ENCODE measurements at regions of chr14 and their contacts with region 1.

Region 1: DNA sequence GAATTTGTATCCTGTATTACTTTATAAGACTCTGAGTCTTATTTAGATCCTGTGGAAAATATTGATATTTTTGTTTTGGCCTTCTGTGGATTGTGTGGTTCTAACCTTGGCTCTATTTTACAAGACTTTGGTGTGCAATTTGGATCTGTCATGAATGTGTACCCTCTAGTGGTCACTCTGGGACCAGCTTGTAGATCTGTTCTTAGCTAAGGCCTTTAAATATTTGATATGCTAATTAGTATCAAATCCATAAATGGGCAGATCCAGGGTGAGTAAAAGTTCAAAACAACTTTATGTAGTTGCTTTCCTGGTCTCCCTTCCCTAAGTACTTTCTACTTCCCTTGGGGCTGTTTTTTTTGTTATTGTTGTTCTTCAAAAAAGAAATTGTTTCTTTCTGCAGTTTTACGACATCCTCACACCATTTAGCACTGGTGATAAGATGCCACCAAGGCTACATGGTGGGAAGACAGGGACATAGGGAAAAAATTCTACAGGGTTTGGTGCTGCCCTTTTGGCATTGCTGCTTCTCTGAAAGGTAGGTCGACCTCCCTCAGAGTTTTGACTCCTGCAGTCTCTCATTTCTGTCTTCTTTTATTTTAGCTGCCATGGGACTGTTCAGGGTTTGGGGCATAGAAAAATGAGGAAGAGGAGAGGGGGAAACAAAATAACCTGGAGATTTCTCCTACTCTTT is 238.5 kb downstream of the GPHN start:
- DNase-seq: no peak
- H3K4me3 Mint-ChIP-seq: no peak overlapping the region
- H3K27ac Mint-ChIP-seq: no peak overlapping the region
- H3K4me1 Mint-ChIP-seq: no peaks in the 10 kb centered on the region
- H3K27me3 Mint-ChIP-seq: no peaks in the 10 kb centered on the region

Region 2: DNA sequence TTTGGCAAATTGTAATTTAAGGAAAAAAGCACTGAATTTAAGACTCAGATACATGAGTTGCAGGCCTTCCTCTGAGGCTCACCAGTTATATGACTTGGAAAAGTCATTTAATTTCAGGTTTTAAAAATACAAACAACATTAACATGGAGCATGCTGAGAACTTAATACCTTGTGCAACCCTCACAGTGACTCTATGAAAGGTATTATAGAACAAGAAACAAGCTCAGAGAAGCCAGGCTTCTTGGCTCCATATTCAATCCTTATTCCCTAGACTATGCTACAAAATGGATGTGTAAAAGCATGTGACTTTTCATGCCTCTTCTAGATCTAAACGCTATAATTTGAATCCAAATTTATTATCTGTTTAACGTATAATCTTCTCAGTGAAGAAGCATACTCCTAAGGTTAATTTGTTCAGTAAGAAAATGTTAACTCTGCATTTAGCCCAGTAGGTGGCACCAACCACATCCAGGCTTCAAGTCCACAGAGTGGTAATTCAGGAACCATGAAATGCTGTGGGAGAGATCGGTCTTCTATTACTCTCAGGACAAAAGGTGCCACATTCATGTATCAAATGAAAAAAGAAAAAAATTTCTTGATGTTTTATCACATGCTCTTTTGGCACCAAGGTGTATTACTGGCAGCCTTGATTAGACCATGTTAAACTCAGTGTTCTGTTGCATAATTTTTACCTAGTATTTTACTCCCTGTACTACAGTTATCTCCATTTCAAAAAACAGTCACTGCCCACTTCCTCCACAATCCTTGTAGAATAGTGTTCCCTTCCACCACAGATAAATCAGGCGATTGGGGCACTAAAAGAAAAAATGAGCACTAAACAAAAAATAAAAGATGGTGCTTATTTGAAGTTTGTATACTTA is 251.0 kb before region 1 on chr14:
- intact Hi-C with region 1: loop called (anchors 10 kb)
- DNase-seq: peak; percentile 79
- H3K4me3 Mint-ChIP-seq: no peak overlapping the region
- H3K27ac Mint-ChIP-seq: no peak overlapping the region
- H3K4me1 Mint-ChIP-seq: peaks cover 22% of the 10 kb centered on the region
- H3K27me3 Mint-ChIP-seq: peaks cover 6% of the 10 kb centered on the region

Region 3: DNA sequence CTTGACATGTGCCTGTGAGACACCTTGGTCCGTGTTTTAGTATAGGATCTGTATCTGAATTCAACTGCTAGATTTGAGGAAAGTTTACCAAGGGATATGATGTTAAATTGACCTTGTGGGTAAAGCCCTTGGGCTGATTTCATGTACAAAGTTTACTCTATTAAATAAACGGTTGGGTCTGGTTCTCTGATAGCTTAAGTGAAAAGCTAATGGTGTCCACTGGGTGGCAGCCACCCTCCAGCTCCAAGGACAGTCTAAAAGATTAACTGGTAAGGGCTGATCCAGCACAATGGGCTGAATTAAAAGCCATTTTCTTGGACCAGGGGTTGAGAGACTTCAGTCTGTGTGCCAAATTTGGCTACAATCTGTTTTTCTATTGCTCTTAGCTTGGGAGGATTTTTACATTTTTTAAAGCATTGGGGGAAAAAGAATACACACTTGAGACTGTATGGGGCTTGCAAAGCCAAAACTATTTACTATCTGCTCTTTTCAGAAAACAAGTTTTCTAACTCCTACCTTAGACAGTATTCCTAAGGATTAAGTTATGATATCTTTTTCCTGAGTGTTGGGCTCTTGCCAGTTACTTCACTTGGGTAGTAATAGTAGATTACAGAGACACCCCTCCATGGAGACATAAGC is 122.0 kb before region 1 on chr14:
- intact Hi-C with region 1: loop called (anchors 10 kb)
- DNase-seq: peak; percentile 78
- H3K4me3 Mint-ChIP-seq: no peak overlapping the region
- H3K27ac Mint-ChIP-seq: no peak overlapping the region
- H3K4me1 Mint-ChIP-seq: no peaks in the 10 kb centered on the region
- H3K27me3 Mint-ChIP-seq: no peaks in the 10 kb centered on the region

Region 4: GRCh38 chr14:66833816-66834215 is 87.4 kb after region 1 on chr14:
- intact Hi-C with region 1: no loop called
- DNase-seq: no peak
- H3K4me3 Mint-ChIP-seq: no peak overlapping the region
- H3K27ac Mint-ChIP-seq: no peak overlapping the region
- H3K4me1 Mint-ChIP-seq: no peaks in the 10 kb centered on the region
- H3K27me3 Mint-ChIP-seq: no peaks in the 10 kb centered on the region

Measured in activated CD4-positive, alpha-beta T cell treated with anti-CD3 and anti-CD28 coated beads, Interleukin-2, amount 10 ng/mL, durations not matched to agents 24 days and 14 days (primary cell).